Tibial artery (tissue), 4 donors: ENCODE measurements at regions of chr10 and their contacts with region 1.

Region 1: DNA sequence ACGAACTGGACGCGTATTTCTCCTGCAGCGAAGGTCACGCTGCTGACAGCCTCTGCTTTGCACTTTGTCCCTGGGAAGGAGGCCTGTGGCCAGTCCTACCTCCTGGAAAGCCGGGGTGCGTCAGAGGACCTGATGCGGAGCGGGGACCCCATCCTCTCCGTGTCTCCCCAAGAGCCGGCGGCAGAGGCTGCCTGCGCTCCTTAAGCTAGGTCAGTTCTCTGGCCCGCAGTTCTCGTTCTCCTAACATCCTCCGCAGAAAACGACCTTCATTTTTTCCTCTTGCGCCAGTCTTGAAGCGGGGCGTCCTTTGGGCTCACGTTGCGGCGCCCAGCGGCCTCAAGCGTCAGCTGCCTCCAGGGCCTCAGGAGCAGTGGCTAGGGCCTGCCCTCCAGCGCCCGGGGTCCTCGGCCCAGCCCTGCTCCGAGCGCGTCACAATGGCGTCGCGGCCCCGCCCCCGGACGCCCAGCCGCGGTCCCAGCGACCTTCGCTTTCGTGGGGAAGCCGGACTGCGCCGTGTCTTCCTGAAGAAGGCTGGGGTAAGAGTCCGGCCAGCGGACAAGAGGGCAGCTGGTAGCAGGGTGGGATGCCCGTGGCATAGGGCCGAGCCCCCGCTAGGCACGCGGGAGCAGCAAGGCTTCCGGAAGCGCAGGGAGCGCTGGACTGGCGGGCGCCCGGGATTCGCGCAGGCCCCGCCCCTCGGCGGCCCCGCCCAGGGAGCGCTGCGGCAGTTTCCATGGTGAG is at the start of gene ZNF487:
- DNase-seq: peak; percentile 86 to 95
- H3K4me3 ChIP-seq: peak within 1 kb of the TSS; percentile 61
- H3K27ac ChIP-seq: peak within 1 kb of the TSS; percentile 90 to 92
- H3K4me1 ChIP-seq: peaks cover 0 to 17% (median 2%) of the 10 kb centered on the region in 4 donors
- H3K27me3 ChIP-seq: no peaks in the 10 kb centered on the region
- CTCF ChIP-seq: peak in 1 of 2 experiments; percentile 8

Region 2: DNA sequence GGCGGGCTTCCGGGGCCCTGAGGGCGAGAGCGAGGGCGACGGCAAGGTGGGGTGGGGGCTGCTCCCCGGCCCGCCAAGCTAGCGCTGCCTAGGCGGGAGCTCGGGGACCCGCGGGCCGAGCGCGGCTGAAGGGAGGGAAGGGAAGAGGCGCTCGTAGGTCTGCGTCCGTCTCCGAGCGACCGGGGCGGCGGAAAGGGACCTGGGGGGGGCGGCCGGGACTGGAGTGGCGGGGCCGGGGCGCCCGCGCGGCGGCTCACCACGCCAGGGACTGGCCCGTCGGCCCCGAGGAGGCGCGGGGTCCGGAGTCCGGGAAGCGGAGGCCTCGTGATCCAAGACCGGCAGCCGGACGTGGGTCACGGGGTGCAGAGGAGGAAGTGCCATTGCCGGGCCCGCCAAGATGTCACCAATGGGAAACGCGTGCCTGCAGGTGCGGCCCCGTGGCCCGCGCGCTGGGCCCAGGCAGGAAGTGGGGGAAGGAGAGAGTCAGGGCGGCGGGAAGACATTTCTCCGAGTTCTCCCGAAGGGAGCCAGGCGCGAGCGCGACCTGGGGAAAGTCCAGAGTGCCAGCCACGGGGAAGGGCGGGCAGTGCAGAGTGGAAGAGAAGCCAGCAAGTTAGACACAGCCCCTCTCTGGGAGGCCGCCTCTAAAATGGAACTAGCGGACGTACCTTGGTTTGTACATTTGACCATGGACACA is 39.5 kb before region 1 on chr10:
- intact Hi-C with region 1: loop called (anchors 5 kb)
- DNase-seq: peak; percentile 90 to 94
- H3K4me3 ChIP-seq: peak overlapping the region; percentile 66 to 70
- H3K27ac ChIP-seq: peak overlapping the region; percentile 95 to 97
- H3K4me1 ChIP-seq: peaks cover 0 to 67% (median 44%) of the 10 kb centered on the region in 4 donors
- H3K27me3 ChIP-seq: no peaks in the 10 kb centered on the region
- CTCF ChIP-seq: no peak